ENCODE measurements at regions of chr6 and their contacts with region 1.

Region 1: GRCh38 chr6:148746363-148747144 is at the start of gene UST:
- DNase-seq: peak; percentile 80 to 92 (median 89)
- H3K4me3 ChIP-seq: peak within 1 kb of the TSS; percentile 53 to 92 (median 80)
- H3K27ac ChIP-seq: peak within 1 kb of the TSS in 1 of 2 experiments; percentile 22
- H3K4me1 ChIP-seq: peaks cover 3 to 30% (median 23%) of the 10 kb centered on the region in 4 experiments
- H3K27me3 ChIP-seq: peaks cover 0 to 5% (median 0%) of the 10 kb centered on the region in 5 experiments

Region 2: GRCh38 chr6:148724428-148724827 is 22.1 kb before region 1 on chr6:
- CTCF ChIA-PET with region 1: no interaction called
- POLR2A ChIA-PET with region 1: no interaction called
- DNase-seq: no peak
- H3K4me3 ChIP-seq: no peak overlapping the region
- H3K27ac ChIP-seq: no peak overlapping the region
- H3K4me1 ChIP-seq: no peaks in the 10 kb centered on the region
- H3K27me3 ChIP-seq: no peaks in the 10 kb centered on the region

Region 3: DNA sequence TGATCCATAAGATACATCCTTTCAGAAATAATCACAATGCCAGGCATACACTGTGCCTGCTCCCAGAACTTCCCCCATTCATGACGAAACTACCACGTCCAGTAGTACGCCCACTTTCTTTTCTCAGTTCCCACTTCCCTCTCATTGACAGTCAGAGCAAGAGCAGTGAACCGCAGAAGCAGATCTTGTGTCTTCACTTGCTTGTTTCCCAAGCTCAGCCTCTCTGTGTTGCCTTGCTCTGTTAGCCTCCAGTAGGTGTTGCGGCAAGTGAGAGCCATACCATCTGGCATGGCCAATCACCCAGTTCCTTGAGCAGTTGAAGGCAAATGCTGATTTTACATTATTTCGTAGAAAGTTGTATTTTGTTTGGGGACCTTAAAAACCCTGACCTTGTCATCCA is 11.9 kb after region 1 on chr6:
- CTCF ChIA-PET with region 1: interaction called, 11 read pairs
- POLR2A ChIA-PET with region 1: no interaction called
- DNase-seq: peak; percentile 79 to 92 (median 90)
- H3K4me3 ChIP-seq: peak overlapping the region in 3 of 7 experiments; percentile 0 to 54 (median 38)
- H3K27ac ChIP-seq: no peak overlapping the region
- H3K4me1 ChIP-seq: peaks cover 28 to 49% (median 38%) of the 10 kb centered on the region in 4 experiments
- H3K27me3 ChIP-seq: peaks cover 0 to 3% (median 0%) of the 10 kb centered on the region in 5 experiments

Region 4: DNA sequence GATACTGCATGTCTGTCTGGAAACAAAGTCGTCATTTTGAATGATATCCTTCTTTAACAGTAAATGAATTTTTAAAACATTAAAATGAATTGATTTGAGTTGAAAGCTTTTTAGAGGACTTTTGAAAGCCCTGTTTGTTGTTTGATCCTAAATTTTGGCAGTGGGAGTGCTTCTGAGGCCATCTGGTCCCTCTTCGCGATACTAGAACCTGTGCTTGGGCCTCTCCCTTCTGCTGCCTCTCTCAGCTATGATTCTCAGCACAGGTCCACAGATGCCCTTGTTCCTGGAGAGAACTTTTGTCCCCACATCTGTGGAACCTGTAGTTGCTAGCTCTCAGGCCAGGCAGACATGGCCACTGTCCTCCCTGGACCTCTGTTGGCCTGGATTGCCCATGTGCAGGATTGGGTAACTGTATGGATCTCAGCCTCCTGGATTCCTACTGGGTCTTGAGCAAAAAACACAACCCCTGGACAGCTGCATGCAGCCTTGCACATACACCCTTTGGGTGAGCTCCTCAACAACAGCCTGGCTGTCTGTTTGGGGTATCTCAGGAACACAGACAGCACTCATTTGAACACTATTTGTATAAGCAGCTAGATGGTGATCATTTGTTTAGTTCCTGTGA is 22.2 kb after region 1 on chr6:
- CTCF ChIA-PET with region 1: no interaction called
- POLR2A ChIA-PET with region 1: no interaction called
- DNase-seq: no peak
- H3K4me3 ChIP-seq: no peak overlapping the region
- H3K27ac ChIP-seq: no peak overlapping the region
- H3K4me1 ChIP-seq: peaks cover 8 to 23% (median 18%) of the 10 kb centered on the region in 4 experiments
- H3K27me3 ChIP-seq: no peaks in the 10 kb centered on the region

Region 5: DNA sequence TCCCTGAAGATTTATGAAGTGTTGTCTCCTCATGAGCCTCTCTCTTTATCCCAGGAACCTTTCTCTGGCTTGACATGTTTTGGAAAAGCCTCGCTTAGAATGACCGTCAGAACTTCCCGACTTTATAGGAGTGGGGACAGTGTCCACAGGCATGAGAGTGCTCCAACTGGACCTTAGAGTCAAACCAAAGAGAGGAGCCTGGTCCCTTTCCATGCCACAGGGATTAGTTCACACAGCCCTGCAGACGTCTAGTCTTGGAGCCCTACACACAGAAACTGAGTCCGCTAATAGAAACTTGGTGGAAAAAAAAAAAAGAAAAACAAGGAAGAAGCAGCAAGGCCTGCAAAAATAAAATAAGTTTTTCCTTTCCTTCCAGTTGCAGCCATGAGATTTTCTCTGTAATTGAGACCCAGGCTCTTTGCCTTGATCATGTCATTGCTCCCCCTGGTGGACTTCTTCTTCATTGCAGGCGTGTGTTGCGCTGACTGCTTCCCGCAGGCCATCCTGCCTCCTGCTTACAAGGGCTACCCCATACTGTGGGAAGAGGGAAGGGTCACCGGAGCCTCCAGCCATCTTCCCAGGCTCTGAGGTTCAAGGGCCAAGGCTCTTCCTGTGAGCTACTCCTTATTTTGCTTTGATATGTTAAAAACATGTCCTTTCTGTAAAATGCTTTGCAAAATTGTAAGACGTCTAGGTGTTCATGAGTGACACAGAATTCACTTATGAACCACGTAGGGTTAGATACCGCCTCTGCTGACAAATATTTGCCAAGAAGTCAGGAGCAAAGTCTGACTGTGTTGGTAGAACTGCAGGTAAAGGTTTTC is 201.3 kb after region 1 on chr6:
- CTCF ChIA-PET with region 1: interaction called, 10 read pairs
- POLR2A ChIA-PET with region 1: no interaction called
- DNase-seq: peak; percentile 75 to 84 (median 77)
- H3K4me3 ChIP-seq: no peak overlapping the region
- H3K27ac ChIP-seq: no peak overlapping the region
- H3K4me1 ChIP-seq: no peaks in the 10 kb centered on the region
- H3K27me3 ChIP-seq: no peaks in the 10 kb centered on the region